Transverse colon (tissue), 4 donors: ENCODE measurements at regions of chr16 and their contacts with region 1.

Region 1: GRCh38 chr16:83520596-83520995 is 287.2 kb upstream of the HSBP1 start:
- DNase-seq: no peak
- H3K4me3 ChIP-seq: no peak overlapping the region
- H3K27ac ChIP-seq: no peak overlapping the region
- H3K4me1 ChIP-seq: no peaks in the 10 kb centered on the region
- H3K27me3 ChIP-seq: no peaks in the 10 kb centered on the region
- CTCF ChIP-seq: no peak
- EP300 ChIP-seq: no peak
- POLR2A ChIP-seq: no peak

Region 2: GRCh38 chr16:83533193-83533592 is 12.6 kb after region 1 on chr16:
- in situ Hi-C with region 1: no loop called
- intact Hi-C with region 1: loop called (anchors 1 kb)
- DNase-seq: no peak
- H3K4me3 ChIP-seq: no peak overlapping the region
- H3K27ac ChIP-seq: no peak overlapping the region
- H3K4me1 ChIP-seq: no peaks in the 10 kb centered on the region
- H3K27me3 ChIP-seq: no peaks in the 10 kb centered on the region
- CTCF ChIP-seq: no peak
- EP300 ChIP-seq: no peak
- POLR2A ChIP-seq: no peak

Region 3: DNA sequence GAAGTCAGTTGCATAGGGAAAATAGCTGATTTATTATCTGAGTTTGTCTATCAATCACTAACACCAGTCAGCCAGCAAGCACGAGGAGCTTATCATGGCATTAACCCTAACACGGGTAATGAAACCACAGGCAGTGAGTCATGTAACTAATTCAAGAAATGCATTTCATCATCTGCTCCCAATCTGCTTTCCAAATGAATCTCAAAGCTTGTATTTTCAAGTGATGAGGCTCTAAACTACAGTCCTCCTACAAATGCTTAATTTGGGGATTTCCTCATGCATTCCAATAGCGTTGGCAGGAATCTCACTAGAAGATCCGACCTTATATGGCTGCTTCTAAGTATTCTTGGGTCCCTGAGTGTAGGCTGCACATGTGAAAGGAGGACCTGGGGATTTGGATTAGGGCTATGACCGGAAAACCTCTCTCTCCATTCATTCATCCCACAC is 168.8 kb after region 1 on chr16:
- in situ Hi-C with region 1: no loop called
- intact Hi-C with region 1: no loop called
- DNase-seq: no peak
- H3K4me3 ChIP-seq: no peak overlapping the region
- H3K27ac ChIP-seq: no peak overlapping the region
- H3K4me1 ChIP-seq: peaks cover 0 to 6% (median 0%) of the 10 kb centered on the region in 4 donors
- H3K27me3 ChIP-seq: no peaks in the 10 kb centered on the region
- CTCF ChIP-seq: no peak
- EP300 ChIP-seq: no peak
- POLR2A ChIP-seq: no peak